Naive thymus-derived CD4-positive, alpha-beta T cell (primary cell): ENCODE measurements at regions of chr2 and their contacts with region 1.

Region 1: GRCh38 chr2:151409601-151410484 is at the start of gene RIF1:
- DNase-seq: peak; percentile 65 to 78 (median 69)
- ATAC-seq: peak; percentile 95
- H3K4me3 ChIP-seq: peak within 1 kb of the TSS; percentile 73
- H3K4me3 Mint-ChIP-seq: peak within 1 kb of the TSS; percentile 91 to 99 (median 96)
- H3K27ac ChIP-seq: peak within 1 kb of the TSS; percentile 89
- H3K27ac Mint-ChIP-seq: peak within 1 kb of the TSS; percentile 88 to 98 (median 95)
- H3K4me1 ChIP-seq: peaks cover 6 to 14% of the 10 kb centered on the region in 2 donors
- H3K4me1 Mint-ChIP-seq: peaks cover 12 to 43% (median 35%) of the 10 kb centered on the region in 7 donors
- H3K27me3 ChIP-seq: no peaks in the 10 kb centered on the region
- H3K27me3 Mint-ChIP-seq: peaks cover 0 to 3% (median 0%) of the 10 kb centered on the region in 5 donors
- total RNA-seq, gene RIF1: 39.8 to 74.0 (median 66.7) TPM

Region 2: GRCh38 chr2:149587220-149587949 is 1822.5 kb before region 1 on chr2 and contains the start of gene MMADHC:
- CTCF ChIA-PET with region 1: no interaction called
- POLR2A ChIA-PET with region 1: interaction called, 6 read pairs
- intact Hi-C with region 1: loop called (anchors 1 kb)
- DNase-seq: peak; percentile 83 to 93 (median 91)
- ATAC-seq: peak; percentile 98
- H3K4me3 ChIP-seq: peak within 1 kb of the TSS; percentile 97
- H3K4me3 Mint-ChIP-seq: peak within 1 kb of the TSS; percentile 95 to 99 (median 97)
- H3K27ac ChIP-seq: peak within 1 kb of the TSS; percentile 93
- H3K27ac Mint-ChIP-seq: peak within 1 kb of the TSS; percentile 95 to 100 (median 99)
- H3K4me1 ChIP-seq: peaks cover 23 to 39% of the 10 kb centered on the region in 2 donors
- H3K4me1 Mint-ChIP-seq: peaks cover 27 to 58% (median 50%) of the 10 kb centered on the region in 7 donors
- H3K27me3 ChIP-seq: no peaks in the 10 kb centered on the region
- H3K27me3 Mint-ChIP-seq: peaks cover 22 to 30% (median 30%) of the 10 kb centered on the region in 5 donors
- total RNA-seq, gene MMADHC: 53.3 to 93.4 (median 66.6) TPM

Region 3: GRCh38 chr2:151379169-151379568 is 30.7 kb before region 1 on chr2:
- CTCF ChIA-PET with region 1: no interaction called
- POLR2A ChIA-PET with region 1: no interaction called
- intact Hi-C with region 1: loop called in 1 of 2 experiments (anchors 1 kb)
- DNase-seq: peak in 6 of 9 donors; percentile 8 to 36 (median 17)
- ATAC-seq: no peak
- H3K4me3 ChIP-seq: no peak overlapping the region
- H3K4me3 Mint-ChIP-seq: no peak overlapping the region
- H3K27ac ChIP-seq: no peak overlapping the region
- H3K27ac Mint-ChIP-seq: no peak overlapping the region
- H3K4me1 ChIP-seq: peaks cover 0 to 5% of the 10 kb centered on the region in 2 donors
- H3K4me1 Mint-ChIP-seq: peaks cover 0 to 7% (median 5%) of the 10 kb centered on the region in 7 donors
- H3K27me3 ChIP-seq: no peaks in the 10 kb centered on the region
- H3K27me3 Mint-ChIP-seq: peaks cover 0 to 3% (median 0%) of the 10 kb centered on the region in 5 donors

Region 4: DNA sequence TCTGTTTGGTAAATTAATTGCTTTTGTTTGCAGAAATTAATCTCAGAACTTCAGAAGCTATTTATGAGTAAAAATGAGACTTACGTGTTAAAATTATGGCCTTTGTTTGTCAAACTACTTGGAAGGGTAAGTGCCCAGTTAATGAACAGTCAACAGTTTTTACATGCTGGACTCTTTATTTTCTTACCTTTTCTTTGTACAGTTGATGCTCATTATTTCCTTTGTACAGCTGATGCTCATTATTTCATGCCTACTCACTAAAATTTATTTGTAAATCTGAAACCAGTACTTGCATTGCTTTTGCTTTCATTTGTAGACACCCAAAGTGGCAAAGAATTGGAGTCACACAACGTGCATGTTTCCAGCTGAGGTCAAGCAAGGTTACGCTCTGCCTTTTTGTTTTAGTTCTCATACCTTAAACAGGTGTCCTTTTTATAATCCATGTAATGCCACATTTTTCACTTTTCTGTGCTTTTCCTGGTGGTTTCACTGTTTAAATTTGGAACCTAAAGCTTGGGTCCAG is 13.1 kb after region 1 on chr2:
- CTCF ChIA-PET with region 1: interaction called, 7 read pairs
- POLR2A ChIA-PET with region 1: interaction called, 6 read pairs
- intact Hi-C with region 1: loop called (anchors 1 kb)
- DNase-seq: no peak
- ATAC-seq: no peak
- H3K4me3 ChIP-seq: no peak overlapping the region
- H3K4me3 Mint-ChIP-seq: peak overlapping the region in 5 of 10 donors; percentile 45 to 63 (median 59)
- H3K27ac ChIP-seq: peak overlapping the region; percentile 53
- H3K27ac Mint-ChIP-seq: peak overlapping the region; percentile 51 to 98 (median 91)
- H3K4me1 ChIP-seq: peaks cover 17 to 20% of the 10 kb centered on the region in 2 donors
- H3K4me1 Mint-ChIP-seq: peaks cover 14 to 49% (median 44%) of the 10 kb centered on the region in 7 donors
- H3K27me3 ChIP-seq: no peaks in the 10 kb centered on the region
- H3K27me3 Mint-ChIP-seq: no peaks in the 10 kb centered on the region